GM23248 (cell line): ENCODE measurements at regions of chr17 and their contacts with region 1.

Region 1: GRCh38 chr17:50094753-50095619 is at the start of gene PDK2:
- DNase-seq: peak; percentile 98
- H3K4me3 ChIP-seq: peak within 1 kb of the TSS; percentile 86
- H3K27ac ChIP-seq: peak within 1 kb of the TSS; percentile 36
- H3K4me1 ChIP-seq: peaks cover 4% of the 10 kb centered on the region; the same call in 1 of the 2 replicates
- H3K27me3 ChIP-seq: no peaks in the 10 kb centered on the region
- total RNA-seq, gene PDK2: 25.9 and 30.2 TPM in 2 replicates

Region 2: GRCh38 chr17:48738803-48739526 is 1356.0 kb before region 1 on chr17:
- in situ Hi-C with region 1: no loop called
- DNase-seq: no peak
- H3K4me3 ChIP-seq: no peak overlapping the region
- H3K27ac ChIP-seq: no peak overlapping the region
- H3K4me1 ChIP-seq: no peaks in the 10 kb centered on the region
- H3K27me3 ChIP-seq: peaks cover 99% of the 10 kb centered on the region

Region 3: DNA sequence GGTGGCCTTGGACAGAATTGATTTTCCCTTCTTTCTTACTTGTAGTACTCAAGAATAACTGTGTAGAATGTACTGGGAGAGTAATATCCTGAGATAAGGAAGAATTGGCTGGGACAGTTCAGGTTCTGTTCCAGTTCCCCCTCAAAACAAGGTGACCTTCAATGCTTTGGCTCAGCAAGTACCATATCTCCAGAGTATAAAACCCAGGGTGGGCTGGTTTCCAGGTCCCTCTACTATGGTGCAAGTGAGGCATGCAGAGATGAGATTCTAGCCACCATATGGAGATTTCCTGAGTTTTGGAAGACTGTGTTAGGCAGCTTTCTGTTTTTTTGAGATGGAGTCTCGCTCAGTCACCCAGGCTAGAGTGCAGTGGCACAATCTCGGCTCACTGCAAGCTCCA is 81.9 kb before region 1 on chr17:
- in situ Hi-C with region 1: no loop called
- DNase-seq: no peak
- H3K4me3 ChIP-seq: no peak overlapping the region
- H3K27ac ChIP-seq: no peak overlapping the region
- H3K4me1 ChIP-seq: no peaks in the 10 kb centered on the region
- H3K27me3 ChIP-seq: peaks cover 11% of the 10 kb centered on the region

Region 4: DNA sequence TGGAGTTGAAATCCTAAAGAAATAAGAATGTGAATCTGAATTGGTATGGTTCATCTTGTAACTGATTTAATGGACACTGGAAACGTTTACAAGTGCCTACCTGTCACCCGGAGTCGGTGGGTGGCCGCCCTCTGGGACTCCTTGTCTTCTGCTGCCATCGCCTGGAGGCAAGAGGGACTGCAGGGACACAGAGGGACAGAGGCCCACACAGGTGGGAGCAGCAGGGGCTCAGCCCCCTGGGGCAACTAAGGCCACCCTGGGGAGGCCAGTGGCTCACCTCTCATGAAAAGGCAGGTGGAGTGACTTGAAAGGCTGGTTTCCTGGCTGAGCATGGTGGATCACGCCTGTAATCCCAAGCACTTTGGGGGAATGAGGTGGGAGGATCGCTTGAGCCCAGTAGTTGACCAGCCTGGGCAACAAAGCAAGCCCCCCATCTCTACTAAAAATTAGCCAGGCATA is 202.4 kb after region 1 on chr17:
- in situ Hi-C with region 1: loop called (anchors 10 kb)
- DNase-seq: peak; percentile 78
- H3K4me3 ChIP-seq: no peak overlapping the region
- H3K27ac ChIP-seq: no peak overlapping the region
- H3K4me1 ChIP-seq: no peaks in the 10 kb centered on the region
- H3K27me3 ChIP-seq: no peaks in the 10 kb centered on the region

Region 5: GRCh38 chr17:50798424-50799288 is 703.7 kb after region 1 on chr17:
- in situ Hi-C with region 1: no loop called
- DNase-seq: no peak
- H3K4me3 ChIP-seq: no peak overlapping the region
- H3K27ac ChIP-seq: no peak overlapping the region
- H3K4me1 ChIP-seq: no peaks in the 10 kb centered on the region
- H3K27me3 ChIP-seq: no peaks in the 10 kb centered on the region